BJ (cell line): ENCODE measurements at regions of chr11 and their contacts with region 1.

Region 1: DNA sequence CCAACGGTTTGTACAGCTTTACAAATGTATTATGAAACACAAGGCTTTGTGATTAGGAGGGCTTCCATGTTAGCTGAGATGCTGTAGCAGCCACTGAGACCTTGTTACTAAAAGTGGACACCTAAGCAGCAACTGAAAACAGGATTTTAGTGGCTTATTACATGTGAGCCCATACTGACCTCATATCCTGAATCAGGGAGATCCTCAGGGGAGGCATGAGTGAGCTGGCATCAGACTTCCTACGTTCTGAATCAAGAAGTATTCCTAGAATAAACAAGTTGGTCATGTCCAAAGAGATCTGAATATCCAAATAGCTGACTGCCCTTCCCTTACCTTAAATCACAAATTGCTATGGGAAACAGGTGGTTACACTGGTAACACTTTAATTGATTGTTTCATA is 59.1 kb upstream of the SCUBE2 start:
- DNase-seq: peak; percentile 35
- H3K4me3 ChIP-seq: no peak overlapping the region
- H3K27me3 ChIP-seq: no peaks in the 10 kb centered on the region
- CTCF ChIP-seq: no peak

Region 2: DNA sequence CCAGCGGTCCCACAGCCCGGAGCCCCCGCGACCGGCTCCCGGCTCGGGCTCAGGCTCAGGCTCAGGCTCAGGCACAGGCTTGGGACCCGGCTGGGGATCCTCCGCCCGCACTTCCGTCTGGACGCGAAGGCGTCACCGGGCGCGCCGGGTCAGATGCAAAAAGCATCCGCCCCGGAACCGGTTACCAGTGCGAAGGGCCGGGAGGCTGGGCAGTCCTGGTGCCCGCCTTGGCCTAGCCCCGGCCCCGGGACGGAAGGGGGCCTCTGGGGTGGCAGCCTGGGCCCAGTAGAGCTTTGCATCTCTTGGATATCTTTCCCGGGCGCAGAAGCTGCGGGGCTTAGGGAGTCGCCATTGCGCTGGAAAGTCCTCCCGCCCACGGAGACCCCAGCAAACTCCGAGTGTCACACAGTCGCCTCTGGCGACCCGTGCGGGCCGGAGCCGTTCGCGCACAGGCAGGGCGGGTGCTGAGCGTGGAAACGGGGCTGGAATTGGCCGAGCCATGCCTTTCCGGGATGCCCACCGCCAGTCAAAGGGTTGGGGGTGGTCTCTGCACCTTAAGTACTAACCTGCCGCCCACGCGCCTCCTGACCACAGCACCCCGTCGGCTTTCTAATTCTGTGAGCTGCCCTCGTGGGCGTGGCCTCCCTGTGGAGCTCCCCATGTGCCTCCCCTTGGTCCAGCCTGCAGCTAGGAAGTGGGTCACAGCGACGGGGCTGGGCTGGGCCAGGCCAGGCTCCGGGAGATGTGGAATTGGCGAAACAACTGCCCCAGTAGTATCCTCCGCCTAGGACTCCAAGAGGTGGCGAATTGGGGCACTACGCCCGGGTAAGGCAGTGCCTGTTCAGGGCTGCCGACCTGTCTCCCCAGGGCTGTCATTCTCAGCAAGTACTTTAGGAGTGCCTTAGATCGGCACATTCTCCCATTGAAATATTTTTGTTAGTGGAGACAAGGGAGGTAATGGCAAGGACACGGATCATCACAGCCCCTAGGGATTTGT is 185.9 kb before region 1 on chr11 and contains the start of gene TMEM9B:
- CTCF ChIA-PET with region 1: no interaction called
- POLR2A ChIA-PET with region 1: no interaction called
- DNase-seq: peak; percentile 31
- H3K4me3 ChIP-seq: peak within 1 kb of the TSS; percentile 90
- H3K27me3 ChIP-seq: no peaks in the 10 kb centered on the region
- CTCF ChIP-seq: no peak
- polyA plus RNA-seq, gene TMEM9B: 24.6 and 46.4 TPM in 2 replicates

Region 3: GRCh38 chr11:9092853-9093778 is 57.4 kb before region 1 on chr11:
- CTCF ChIA-PET with region 1: no interaction called
- POLR2A ChIA-PET with region 1: no interaction called
- DNase-seq: no peak
- H3K4me3 ChIP-seq: no peak overlapping the region
- H3K27me3 ChIP-seq: peaks cover 3% of the 10 kb centered on the region; the same call in 1 of the 2 replicates
- CTCF ChIP-seq: no peak

Region 4: DNA sequence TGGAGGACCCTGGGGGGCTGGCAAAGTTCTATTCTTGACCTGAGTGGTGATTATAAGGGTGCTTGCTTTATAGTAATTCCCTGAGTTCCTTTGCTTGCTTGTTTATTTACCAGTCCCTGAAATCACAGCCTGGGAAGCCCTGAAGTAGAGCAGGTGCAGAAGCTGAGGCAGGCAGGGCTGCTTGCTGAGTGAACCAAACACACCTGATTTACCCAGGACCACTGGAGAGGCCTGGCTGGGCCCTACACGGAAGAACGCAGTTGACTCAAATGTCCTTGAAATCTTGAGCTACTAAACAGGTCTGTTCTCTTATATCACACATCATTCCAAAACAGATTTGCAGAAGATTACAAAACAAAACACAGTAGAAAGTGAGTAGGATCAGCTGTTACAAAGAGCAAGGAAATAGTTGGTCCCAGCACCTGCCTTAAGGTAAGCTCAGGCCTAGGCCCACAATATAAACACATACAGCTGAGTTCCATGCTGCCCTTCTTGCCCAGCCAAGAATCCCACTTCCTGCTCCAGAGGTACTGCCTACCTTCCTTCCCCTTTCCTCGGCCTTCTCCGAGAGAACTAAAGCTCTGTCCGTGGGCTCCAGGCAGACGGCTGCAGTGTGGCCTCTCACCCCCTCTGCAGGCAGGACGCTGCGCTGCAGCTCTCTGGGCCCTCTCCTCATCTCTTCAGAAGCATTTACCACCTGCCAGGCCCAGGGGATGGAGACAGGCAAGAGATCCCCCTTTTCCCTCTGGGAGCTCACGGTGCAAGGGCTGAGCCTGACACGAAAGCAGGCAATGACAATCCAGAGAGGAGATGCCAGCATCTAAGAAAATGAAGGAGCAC is 13.0 kb before region 1 on chr11:
- CTCF ChIA-PET with region 1: interaction called, 11 read pairs
- POLR2A ChIA-PET with region 1: no interaction called
- DNase-seq: no peak
- H3K4me3 ChIP-seq: no peak overlapping the region
- H3K27me3 ChIP-seq: no peaks in the 10 kb centered on the region
- CTCF ChIP-seq: peak; percentile 99